ENCODE measurements at regions of chr21 and their contacts with region 1.

Region 1: DNA sequence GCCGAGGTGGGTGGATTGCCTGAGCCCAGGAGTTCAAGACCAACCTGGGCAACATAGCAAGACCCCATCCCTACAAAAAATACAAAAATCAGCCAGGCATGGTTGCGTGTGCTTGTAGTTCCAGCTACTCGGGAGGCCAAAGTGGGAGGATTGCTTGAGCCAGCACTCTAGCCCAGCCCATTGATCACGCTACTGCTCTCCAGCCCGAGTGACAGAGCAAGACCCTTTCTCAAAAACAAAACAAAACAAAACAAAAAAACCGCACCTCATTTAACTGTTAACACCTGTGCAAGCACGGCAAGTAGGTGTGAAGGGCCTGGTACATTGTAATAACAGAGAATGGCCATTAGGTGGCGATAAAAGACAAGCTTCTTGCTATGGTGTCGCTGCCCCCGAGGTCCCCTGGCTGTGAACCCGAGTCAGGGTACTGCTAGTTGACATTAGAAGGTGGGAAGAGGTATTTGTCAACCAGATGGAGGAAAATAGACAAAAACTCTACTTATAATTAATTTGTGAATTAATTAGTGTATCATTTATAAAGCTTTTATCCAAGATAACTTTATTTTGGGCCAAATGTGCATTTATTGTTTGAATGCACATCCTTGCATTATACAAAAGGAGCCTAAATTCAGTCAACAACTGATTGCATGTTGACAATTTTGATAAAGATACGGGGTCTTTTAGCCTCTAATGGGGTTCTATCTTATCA is 66.5 kb downstream of the SH3BGR start:
- DNase-seq: peak in 40 of 42 donors; percentile 33 to 87 (median 62)

Region 2: GRCh38 chr21:39612233-39613040 is 94.1 kb after region 1 on chr21 and contains the start of gene B3GALT5:
- intact Hi-C with region 1: no loop called
- DNase-seq: peak in 33 of 42 donors; percentile 22 to 78 (median 52)

Region 3: DNA sequence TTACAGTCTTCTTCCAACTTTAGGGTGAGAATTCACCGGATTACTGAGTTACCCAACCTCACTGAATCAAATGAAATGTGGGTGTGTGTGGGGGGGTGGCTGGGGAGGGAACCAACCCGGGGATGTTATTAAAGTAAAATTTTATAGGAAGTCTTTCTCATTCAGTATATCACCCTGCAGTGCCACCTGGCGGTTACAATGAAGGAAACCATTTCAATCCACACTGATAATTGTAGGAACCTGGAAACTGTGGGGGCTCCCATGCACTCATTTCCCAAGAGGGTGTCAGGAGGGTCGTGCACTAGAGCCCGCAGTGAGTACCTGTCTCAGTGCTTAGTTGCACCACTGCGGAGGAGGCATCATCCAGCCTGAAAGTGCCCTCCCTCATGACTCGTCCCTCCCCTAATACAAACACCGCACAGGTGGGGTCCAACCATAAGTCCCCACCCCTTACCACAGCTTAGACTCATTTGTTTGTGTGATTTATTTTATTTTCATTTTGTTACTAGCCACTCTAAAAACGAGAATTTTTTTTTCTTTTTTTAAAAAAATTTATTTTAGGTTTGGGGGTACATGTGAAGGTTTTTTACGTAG is 197.6 kb after region 1 on chr21:
- intact Hi-C with region 1: loop called (anchors 5 kb)
- DNase-seq: peak; percentile 31 to 91 (median 75)

Measured in head of caudate nucleus (tissue), 42 donors.